Left colon (tissue), 2 donors: ENCODE measurements at regions of chr2 and their contacts with region 1.

Region 1: GRCh38 chr2:197804049-197804757 is at the start of gene PLCL1:
- DNase-seq: peak; percentile 87 to 91
- ATAC-seq: peak; percentile 99
- total RNA-seq, gene PLCL1: 1.1 to 3.0 TPM

Region 2: GRCh38 chr2:197657562-197657961 is 146.6 kb before region 1 on chr2:
- intact Hi-C with region 1: no loop called
- DNase-seq: no peak
- ATAC-seq: no peak

Region 3: DNA sequence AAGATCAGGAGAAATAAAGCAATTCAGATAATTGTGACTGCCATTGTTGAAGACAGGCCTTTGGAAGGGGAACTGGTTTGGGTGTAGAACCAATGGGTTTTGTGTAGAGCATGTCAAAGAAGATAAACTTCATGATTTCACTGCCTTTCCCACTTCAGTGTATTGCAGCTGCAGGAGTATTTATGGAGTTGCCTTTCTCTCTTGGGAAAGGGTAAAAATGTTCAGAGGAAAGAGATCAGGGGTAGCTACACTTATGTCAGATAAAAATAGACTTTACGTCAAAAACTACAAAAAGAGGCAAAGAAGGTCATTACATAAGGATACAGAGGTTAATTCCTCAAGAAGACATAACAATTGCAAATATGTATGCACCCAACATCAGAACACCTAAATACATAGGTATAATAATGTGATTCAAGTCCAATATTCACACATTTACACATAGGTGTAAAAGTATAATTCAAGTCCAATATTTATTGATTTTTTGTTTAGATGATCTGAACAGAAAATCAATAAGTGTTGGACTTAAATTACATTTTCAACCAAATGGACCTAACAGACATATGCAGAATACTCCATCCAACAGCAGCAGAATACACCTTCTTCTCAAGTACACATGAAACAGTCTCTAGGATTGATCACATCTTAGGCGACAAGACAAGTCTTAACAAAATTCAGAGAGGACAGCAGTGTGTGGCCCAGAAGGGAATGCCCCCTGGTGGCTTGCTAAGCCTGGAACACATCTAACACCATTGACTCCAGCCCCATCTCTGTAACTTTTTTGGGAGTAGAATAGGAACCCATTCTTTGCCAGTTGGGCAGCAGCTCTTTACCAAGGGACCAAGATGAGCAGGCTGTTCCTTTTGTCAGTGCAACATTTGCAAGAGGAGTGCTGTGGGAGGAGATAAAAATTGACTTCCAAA is 249.8 kb after region 1 on chr2:
- intact Hi-C with region 1: loop called in 1 of 2 experiments (anchors 10 kb)
- DNase-seq: peak in 1 of 2 donors; percentile 32
- ATAC-seq: peak; percentile 45

Region 4: GRCh38 chr2:198127627-198128026 is 323.4 kb after region 1 on chr2:
- intact Hi-C with region 1: loop called in 1 of 2 experiments (anchors 5 kb)
- DNase-seq: peak in 1 of 2 donors; percentile 7
- ATAC-seq: peak; percentile 52

Region 5: DNA sequence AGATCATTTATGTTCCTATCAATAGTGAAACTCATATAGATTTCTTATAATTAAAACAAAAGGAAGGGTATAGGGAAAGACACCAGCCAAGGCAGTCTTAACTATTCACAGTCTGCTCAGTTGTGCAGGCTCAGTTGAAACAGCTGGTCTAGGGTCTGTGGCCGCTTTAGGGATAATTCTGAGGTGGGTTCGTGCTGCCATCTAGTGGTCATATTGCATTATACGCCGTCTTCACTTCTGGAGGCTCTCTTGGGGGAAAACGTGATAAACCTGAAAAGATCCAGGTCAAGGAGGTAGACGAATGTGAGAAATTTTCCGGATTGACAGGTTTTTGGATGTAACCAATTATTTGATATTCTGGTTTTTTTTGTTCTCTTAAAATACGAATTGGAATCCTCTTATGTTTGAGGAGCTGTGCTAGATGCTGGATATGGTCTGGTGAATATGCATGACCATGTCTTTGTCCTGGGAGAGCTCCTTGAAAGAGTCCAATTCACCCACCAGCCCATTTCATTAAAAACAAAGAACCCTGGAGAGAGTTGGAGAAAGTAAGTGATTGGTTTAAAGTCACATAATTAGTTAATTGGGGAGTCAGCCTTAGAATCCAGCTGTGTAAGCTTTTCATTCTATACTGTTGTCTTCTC is 492.6 kb after region 1 on chr2:
- intact Hi-C with region 1: loop called (anchors 5 to 10 kb)
- DNase-seq: peak in 1 of 2 donors; percentile 50
- ATAC-seq: peak; percentile 66